ENCODE measurements at regions of chr20 and their contacts with region 1.

Region 1: GRCh38 chr20:9407805-9408421 is 106.5 kb upstream of the LAMP5 start:
- DNase-seq: peak; percentile 79
- H3K4me3 ChIP-seq: no peak overlapping the region
- H3K27ac ChIP-seq: no peak overlapping the region
- H3K4me1 ChIP-seq: peaks cover 2% of the 10 kb centered on the region
- H3K27me3 ChIP-seq: no peaks in the 10 kb centered on the region
- CTCF ChIP-seq: peak; percentile 69 to 73
- POLR2A ChIP-seq: no peak

Region 2: DNA sequence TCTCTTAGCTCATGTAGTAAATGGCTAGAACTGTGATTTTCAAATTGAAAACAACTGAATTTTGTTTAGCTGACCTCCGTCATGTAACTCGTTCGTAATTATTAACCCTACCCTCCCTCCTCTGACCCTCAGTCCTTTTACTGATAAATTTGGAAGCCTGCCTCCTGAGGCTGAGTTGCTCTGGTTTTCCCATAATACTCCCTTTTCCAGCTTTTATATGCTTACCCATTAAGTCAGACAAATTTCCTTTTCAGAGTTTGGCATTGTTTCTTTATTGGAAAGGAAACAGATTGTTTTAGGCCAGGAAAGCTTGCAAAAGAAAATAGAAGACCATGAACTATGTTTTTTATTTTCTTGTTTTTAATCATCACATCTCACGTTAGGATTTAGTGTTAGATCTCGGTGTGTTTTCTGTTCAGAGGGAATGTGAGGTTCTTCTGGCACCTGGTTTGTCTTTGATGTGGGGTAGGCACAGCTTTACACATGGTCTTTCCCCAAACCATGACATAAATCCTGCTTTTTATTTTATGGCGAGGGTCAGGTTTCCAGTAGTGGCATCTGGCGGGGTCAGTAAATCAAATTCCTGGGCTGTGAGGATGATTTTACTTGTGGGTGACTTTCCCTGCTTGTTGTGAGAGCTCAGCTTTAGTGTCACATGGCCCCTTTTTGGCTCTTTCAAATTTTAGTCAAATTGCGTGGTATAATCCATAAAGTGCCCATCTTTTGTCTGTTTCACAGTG is 314.5 kb before region 1 on chr20:
- CTCF ChIA-PET with region 1: no interaction called
- POLR2A ChIA-PET with region 1: no interaction called
- dilution Hi-C with region 1: no loop called
- intact Hi-C with region 1: no loop called
- DNase-seq: peak; percentile 86
- H3K4me3 ChIP-seq: no peak overlapping the region
- H3K27ac ChIP-seq: no peak overlapping the region
- H3K4me1 ChIP-seq: peaks cover 5% of the 10 kb centered on the region
- H3K27me3 ChIP-seq: no peaks in the 10 kb centered on the region
- CTCF ChIP-seq: no peak
- POLR2A ChIP-seq: no peak

Region 3: DNA sequence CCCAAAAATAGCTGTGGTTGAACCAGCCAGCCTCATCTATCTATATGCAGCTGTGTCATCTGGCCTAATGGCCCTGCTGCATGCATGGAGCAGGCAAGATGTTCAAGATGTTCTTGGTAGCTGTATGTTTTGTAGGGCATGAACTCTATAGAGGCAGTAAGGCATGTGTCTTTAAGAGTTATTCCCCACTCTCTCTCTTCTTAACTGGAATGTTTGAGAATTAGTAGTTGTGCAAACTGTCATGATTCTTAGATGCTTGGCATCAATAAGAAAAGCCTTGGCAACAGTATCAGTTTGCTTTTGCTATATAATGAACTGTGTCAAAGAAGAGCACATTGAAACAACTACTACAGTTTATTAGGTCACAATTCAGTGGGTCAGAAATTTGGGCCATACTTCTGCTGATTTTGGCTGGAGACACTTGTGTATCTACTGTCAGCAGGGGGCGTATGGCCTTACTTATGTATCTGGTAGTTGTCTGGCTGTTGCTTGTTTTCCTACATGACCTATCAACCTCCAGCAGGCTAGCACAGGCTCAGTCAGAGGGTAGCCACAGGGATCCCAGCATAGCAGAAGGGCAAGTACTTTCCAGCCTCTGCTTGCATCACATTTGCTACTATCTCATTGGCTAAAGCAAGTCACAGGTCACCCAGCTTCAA is 50.4 kb after region 1 on chr20:
- CTCF ChIA-PET with region 1: interaction called, 45 read pairs
- POLR2A ChIA-PET with region 1: no interaction called
- dilution Hi-C with region 1: no loop called
- intact Hi-C with region 1: loop called (anchors 1 kb)
- DNase-seq: no peak
- H3K4me3 ChIP-seq: no peak overlapping the region
- H3K27ac ChIP-seq: no peak overlapping the region
- H3K4me1 ChIP-seq: peaks cover 13% of the 10 kb centered on the region
- H3K27me3 ChIP-seq: no peaks in the 10 kb centered on the region
- CTCF ChIP-seq: peak; percentile 22 to 36
- POLR2A ChIP-seq: no peak

Region 4: DNA sequence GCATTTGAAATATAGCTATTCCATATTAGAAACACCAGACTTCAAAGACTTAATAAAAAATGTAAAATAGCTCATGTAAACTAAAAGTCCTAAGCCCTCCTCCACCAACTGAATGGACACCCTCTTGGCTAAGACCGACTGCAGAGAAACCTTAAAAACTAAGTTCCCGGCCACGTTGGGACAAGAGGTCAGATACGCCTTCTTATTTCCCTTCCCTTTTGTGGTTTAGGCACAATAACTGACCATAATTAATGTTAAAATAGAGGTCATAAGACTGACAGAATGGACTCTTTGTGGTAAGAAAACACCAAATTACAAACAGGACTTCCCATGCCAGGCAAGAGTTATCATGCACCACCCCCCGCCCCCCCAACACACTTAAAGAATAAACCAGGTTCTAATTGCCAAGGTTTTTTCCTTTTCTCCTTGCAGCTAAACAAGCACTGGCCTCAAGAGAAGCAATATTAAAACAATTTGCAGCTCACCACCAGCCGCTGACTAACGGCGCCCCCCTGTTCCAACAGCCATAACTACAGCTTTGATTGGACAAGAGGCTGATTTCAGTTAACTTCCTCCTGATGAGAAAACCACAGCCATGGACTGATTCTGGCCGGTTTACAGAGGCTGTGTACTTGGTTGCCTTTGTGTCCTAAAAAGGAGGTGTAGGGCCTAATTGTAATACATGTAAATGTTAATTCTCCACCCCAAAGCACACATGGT is 95.8 kb after region 1 on chr20:
- CTCF ChIA-PET with region 1: interaction called, 17 read pairs
- POLR2A ChIA-PET with region 1: no interaction called
- dilution Hi-C with region 1: no loop called
- intact Hi-C with region 1: no loop called
- DNase-seq: no peak
- H3K4me3 ChIP-seq: no peak overlapping the region
- H3K27ac ChIP-seq: no peak overlapping the region
- H3K4me1 ChIP-seq: no peaks in the 10 kb centered on the region
- H3K27me3 ChIP-seq: peaks cover 36 to 43% of the 10 kb centered on the region in 2 experiments
- CTCF ChIP-seq: no peak
- POLR2A ChIP-seq: no peak

Region 5: DNA sequence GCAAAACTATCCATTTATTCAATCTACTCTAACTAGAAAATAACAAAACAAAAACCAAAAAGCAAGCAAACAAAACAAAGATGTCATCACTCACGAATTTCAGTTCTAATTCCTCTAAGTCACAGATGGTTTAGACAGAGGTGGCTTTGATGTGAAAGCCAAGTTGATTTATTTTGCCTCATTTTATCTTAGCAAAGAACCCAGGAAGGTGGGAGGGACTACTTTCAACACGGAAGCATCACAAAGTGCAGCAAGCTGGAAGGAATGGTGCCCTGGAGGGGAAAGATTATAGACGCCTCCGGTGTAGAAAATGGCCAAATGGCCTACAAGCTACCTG is 194.9 kb after region 1 on chr20:
- CTCF ChIA-PET with region 1: interaction called, 776 read pairs
- POLR2A ChIA-PET with region 1: no interaction called
- dilution Hi-C with region 1: no loop called
- intact Hi-C with region 1: no loop called
- DNase-seq: no peak
- H3K4me3 ChIP-seq: no peak overlapping the region
- H3K27ac ChIP-seq: no peak overlapping the region
- H3K4me1 ChIP-seq: no peaks in the 10 kb centered on the region
- H3K27me3 ChIP-seq: no peaks in the 10 kb centered on the region
- CTCF ChIP-seq: no peak
- POLR2A ChIP-seq: no peak

Region 6: DNA sequence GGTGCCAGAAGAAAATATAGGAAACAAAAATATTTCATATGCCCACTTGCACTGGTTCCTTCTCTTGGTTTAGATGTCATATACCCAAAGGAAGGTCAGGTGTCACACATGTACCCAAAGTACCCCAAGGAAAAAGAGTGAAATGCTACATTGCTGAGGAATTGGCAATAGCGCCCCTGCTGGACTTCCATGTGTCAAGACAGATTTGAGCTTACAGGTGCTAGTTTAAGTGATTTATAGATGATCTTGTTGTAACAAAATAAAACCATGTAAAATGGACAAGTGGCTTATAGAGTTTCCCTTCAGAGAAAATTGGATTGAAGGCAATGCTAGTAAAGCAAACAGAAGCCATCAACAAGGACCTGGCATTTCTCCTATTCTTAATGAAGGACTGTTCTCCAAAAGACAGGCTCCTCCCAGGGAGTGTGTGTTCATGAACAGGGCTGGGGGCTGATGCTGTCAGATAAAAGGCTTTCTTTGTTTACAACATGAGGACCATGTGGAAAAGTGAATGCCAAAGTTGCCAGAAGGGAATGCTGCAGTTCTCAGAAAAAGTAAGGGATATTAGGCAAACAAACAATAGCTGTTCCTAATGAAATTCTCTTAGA is 495.2 kb after region 1 on chr20:
- CTCF ChIA-PET with region 1: interaction called, 11 read pairs
- POLR2A ChIA-PET with region 1: no interaction called
- dilution Hi-C with region 1: no loop called
- intact Hi-C with region 1: no loop called
- DNase-seq: peak; percentile 11
- H3K4me3 ChIP-seq: no peak overlapping the region
- H3K27ac ChIP-seq: no peak overlapping the region
- H3K4me1 ChIP-seq: no peaks in the 10 kb centered on the region
- H3K27me3 ChIP-seq: peaks cover 0 to 1% of the 10 kb centered on the region in 2 experiments
- CTCF ChIP-seq: peak; percentile 51 to 53
- POLR2A ChIP-seq: no peak

Measured in endothelial cell of umbilical vein (primary cell).